ENCODE measurements at regions of chr11 and their contacts with region 1.

Region 1: GRCh38 chr11:104918113-104918824 is 20.0 kb upstream of the CASP12 start:
- DNase-seq: peak; percentile 45
- ATAC-seq: peak; percentile 61
- H3K4me3 ChIP-seq: peak overlapping the region; percentile 42 to 75 (median 58)
- H3K4me3 Mint-ChIP-seq: peak overlapping the region; percentile 89
- H3K27ac ChIP-seq: peak overlapping the region; percentile 62 to 90
- H3K27ac Mint-ChIP-seq: peak overlapping the region; percentile 86
- H3K4me1 ChIP-seq: peaks cover 29 to 48% of the 10 kb centered on the region in 2 donors
- H3K4me1 Mint-ChIP-seq: peaks cover 68% of the 10 kb centered on the region
- H3K27me3 ChIP-seq: no peaks in the 10 kb centered on the region
- H3K27me3 Mint-ChIP-seq: no peaks in the 10 kb centered on the region
- CTCF ChIP-seq: no peak

Region 2: DNA sequence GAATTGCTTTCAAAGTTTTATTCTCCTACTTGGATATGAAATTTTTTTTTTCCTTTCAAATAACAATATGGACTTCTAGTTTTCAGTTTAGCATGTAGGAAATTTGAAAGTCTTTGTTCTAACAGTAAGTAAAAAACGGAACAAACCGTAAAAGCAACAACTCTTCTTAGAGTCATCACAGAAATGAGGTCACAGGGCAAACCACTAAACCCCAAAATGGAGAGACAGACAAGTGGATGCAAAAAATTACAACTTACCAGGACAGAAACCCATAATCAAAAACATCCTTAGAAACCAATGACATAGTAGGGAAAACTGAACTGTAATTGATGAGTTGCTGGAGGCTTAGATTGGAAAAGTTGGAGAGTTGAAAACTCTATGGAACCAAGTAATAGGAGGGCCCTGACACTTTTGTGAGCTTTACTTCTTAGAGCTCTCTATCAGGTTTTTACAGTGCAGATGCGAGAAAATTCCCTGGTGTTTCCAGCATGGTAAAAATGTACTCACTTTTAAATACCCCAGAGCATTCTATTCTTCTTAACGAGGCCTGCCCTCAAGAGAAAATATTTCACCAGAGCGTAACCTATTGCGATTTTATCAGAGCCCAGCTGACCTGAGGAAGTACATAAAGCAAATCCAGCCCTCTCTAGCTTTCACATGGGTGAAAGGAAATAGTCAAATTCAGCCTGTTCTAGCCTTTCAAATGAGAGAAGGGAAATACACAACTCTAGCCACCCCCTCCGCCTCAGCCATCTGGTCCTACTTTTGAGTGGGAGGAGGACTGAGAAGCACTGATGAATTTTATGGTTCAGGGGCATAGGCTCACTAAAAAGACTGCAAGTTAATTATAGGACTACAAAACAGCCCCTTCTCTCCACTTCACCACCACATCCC is 59.1 kb before region 1 on chr11:
- CTCF ChIA-PET with region 1: no interaction called
- POLR2A ChIA-PET with region 1: no interaction called
- intact Hi-C with region 1: loop called (anchors 10 kb)
- DNase-seq: peak; percentile 66
- ATAC-seq: peak; percentile 88
- H3K4me3 ChIP-seq: peak overlapping the region in 3 of 5 experiments; percentile 15 to 46 (median 38)
- H3K4me3 Mint-ChIP-seq: peak overlapping the region; percentile 79
- H3K27ac ChIP-seq: peak overlapping the region; percentile 72 to 89
- H3K27ac Mint-ChIP-seq: peak overlapping the region; percentile 91
- H3K4me1 ChIP-seq: peaks cover 18 to 27% of the 10 kb centered on the region in 2 donors
- H3K4me1 Mint-ChIP-seq: peaks cover 34% of the 10 kb centered on the region
- H3K27me3 ChIP-seq: no peaks in the 10 kb centered on the region
- H3K27me3 Mint-ChIP-seq: no peaks in the 10 kb centered on the region
- CTCF ChIP-seq: no peak

Region 3: DNA sequence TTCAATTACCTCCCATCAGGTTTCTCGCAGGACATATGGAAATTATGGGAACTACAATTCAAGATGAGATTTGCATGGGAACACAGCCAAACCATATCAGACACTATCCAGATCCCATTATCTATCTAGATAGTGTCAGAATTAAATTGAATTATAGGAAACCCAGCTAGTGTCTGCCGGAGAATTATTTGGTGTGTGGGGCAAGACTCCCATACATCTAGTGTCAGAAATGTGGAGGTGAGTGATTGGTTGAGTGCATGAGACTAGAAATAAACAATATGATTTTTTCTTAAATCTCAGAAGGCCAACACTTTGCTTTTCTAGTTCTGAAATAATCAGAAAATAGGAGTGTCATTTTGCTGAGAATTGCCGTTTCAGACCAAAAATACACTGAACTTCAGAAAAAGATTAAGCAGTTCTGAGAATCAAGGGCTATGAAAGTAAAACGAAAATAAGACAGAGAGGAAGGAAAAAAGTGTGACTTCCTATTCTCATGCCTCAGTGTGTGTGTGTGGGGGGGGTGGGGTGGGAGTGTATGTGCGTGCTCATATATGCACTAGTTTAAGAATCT is 41.3 kb before region 1 on chr11:
- CTCF ChIA-PET with region 1: no interaction called
- POLR2A ChIA-PET with region 1: no interaction called
- intact Hi-C with region 1: loop called (anchors 5 kb)
- DNase-seq: peak; percentile 66
- ATAC-seq: peak; percentile 77
- H3K4me3 ChIP-seq: peak overlapping the region; percentile 9 to 64 (median 24)
- H3K4me3 Mint-ChIP-seq: peak overlapping the region; percentile 68
- H3K27ac ChIP-seq: peak overlapping the region; percentile 78 to 82
- H3K27ac Mint-ChIP-seq: peak overlapping the region; percentile 82
- H3K4me1 ChIP-seq: peaks cover 34 to 36% of the 10 kb centered on the region in 2 donors
- H3K4me1 Mint-ChIP-seq: peaks cover 61% of the 10 kb centered on the region
- H3K27me3 ChIP-seq: no peaks in the 10 kb centered on the region
- H3K27me3 Mint-ChIP-seq: no peaks in the 10 kb centered on the region
- CTCF ChIP-seq: no peak

Region 4: DNA sequence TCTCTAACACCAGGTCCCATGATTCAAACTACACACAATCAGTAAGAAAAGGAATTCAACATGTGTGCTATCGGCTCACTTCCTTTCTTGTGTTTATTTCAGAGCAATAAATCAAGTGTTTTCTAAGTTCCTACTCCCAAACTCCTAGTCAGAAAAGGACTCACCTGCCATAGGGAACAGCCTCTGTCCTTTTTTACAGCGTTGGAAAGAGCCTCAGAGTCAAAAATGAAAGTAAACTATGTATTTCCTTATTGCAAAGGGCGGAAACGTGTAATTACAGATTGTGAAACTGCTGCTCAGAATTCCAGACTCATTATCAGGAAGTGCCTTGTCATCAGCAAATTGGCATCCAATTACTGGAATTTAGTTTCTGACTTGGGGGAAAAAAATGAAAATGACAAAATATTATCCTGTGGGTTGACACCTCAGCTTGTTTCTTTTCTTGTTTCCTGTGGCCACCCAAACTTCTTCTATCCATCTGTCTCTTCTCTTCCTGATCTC is 50.1 kb after region 1 on chr11 and contains the start of gene CASP4:
- CTCF ChIA-PET with region 1: no interaction called
- POLR2A ChIA-PET with region 1: no interaction called
- intact Hi-C with region 1: loop called (anchors 5 kb)
- DNase-seq: peak; percentile 72
- ATAC-seq: peak; percentile 75
- H3K4me3 ChIP-seq: peak within 1 kb of the TSS; percentile 66 to 99 (median 85)
- H3K4me3 Mint-ChIP-seq: peak within 1 kb of the TSS; percentile 94
- H3K27ac ChIP-seq: peak within 1 kb of the TSS; percentile 85 to 97
- H3K27ac Mint-ChIP-seq: peak within 1 kb of the TSS; percentile 92
- H3K4me1 ChIP-seq: peaks cover 30 to 32% of the 10 kb centered on the region in 2 donors
- H3K4me1 Mint-ChIP-seq: peaks cover 39% of the 10 kb centered on the region
- H3K27me3 ChIP-seq: no peaks in the 10 kb centered on the region
- H3K27me3 Mint-ChIP-seq: no peaks in the 10 kb centered on the region
- CTCF ChIP-seq: no peak
- total RNA-seq, gene CASP4: 72.4 and 82.8 TPM in 2 replicates

Region 5: GRCh38 chr11:105109855-105110687 is 191.8 kb after region 1 on chr11:
- CTCF ChIA-PET with region 1: no interaction called
- POLR2A ChIA-PET with region 1: no interaction called
- intact Hi-C with region 1: no loop called
- DNase-seq: no peak
- ATAC-seq: no peak
- H3K4me3 ChIP-seq: no peak overlapping the region
- H3K4me3 Mint-ChIP-seq: peak overlapping the region; percentile 20
- H3K27ac ChIP-seq: no peak overlapping the region
- H3K27ac Mint-ChIP-seq: no peak overlapping the region
- H3K4me1 ChIP-seq: peaks cover 0 to 3% of the 10 kb centered on the region in 2 donors
- H3K4me1 Mint-ChIP-seq: peaks cover 11% of the 10 kb centered on the region
- H3K27me3 ChIP-seq: peaks cover 0 to 5% (median 0%) of the 10 kb centered on the region in 4 experiments
- H3K27me3 Mint-ChIP-seq: peaks cover 28% of the 10 kb centered on the region
- CTCF ChIP-seq: no peak

Measured in B cell (primary cell).